Heart left ventricle (tissue), 16 donors: ENCODE measurements at regions of chr13 and their contacts with region 1.

Region 1: DNA sequence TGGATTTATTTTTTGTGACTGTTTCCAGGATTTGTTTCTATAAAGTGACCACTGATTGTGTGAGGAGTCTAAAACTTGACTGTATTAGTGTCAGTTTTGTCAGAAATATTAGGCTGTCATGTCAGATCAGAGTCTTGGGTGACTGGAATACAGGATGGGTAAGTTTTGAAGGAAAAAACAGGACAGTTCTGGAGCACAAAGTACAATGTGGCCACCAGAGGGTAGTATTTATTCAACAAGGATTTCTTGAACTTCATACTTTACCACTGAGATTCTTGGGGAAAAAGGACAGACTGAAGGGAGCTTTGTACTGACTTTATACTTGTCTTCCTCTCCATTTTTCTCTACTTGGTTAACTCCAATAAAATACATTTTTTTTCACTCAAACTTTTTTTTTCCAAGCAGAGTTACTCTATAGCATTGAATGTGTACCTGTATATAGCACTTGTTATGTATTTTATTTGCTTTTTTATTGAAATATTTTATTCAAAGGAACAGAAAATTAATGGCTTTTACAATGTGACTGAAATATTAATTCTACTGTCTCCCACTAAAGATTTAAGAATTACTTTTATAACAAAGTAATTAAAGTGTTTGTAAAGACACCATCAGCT is 51.1 kb downstream of the LMO7 start:
- DNase-seq: no peak
- ATAC-seq: peak in 1 of 4 donors; percentile 28
- H3K4me3 ChIP-seq: no peak overlapping the region
- H3K27ac ChIP-seq: no peak overlapping the region
- H3K4me1 ChIP-seq: no peaks in the 10 kb centered on the region
- H3K27me3 ChIP-seq: no peaks in the 10 kb centered on the region
- CTCF ChIP-seq: peak in 11 of 12 donors; percentile 13 to 54 (median 36)
- POLR2A ChIP-seq: no peak

Region 2: DNA sequence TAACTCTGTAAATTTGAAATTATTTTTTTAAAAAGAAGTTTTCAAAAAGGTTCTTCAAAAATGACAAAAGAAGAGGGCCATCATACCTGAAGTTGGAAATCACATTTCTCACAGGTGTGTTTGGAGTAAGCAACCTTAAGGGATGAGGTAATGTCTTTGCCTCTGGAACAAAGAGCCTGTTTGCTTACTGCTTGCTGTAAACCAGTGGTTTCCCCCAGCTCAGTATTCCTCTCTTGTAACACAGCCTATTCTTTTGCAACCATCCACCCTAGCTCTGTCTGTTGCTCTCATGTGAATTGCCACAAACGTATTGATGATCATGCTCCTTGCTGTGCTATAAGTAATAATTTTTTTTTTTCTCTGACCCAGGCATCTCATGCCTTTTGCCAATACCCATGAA is 99.6 kb before region 1 on chr13:
- intact Hi-C with region 1: no loop called
- DNase-seq: no peak
- ATAC-seq: no peak
- H3K4me3 ChIP-seq: no peak overlapping the region
- H3K27ac ChIP-seq: no peak overlapping the region
- H3K4me1 ChIP-seq: no peaks in the 10 kb centered on the region
- H3K27me3 ChIP-seq: no peaks in the 10 kb centered on the region
- CTCF ChIP-seq: no peak
- POLR2A ChIP-seq: no peak

Region 3: DNA sequence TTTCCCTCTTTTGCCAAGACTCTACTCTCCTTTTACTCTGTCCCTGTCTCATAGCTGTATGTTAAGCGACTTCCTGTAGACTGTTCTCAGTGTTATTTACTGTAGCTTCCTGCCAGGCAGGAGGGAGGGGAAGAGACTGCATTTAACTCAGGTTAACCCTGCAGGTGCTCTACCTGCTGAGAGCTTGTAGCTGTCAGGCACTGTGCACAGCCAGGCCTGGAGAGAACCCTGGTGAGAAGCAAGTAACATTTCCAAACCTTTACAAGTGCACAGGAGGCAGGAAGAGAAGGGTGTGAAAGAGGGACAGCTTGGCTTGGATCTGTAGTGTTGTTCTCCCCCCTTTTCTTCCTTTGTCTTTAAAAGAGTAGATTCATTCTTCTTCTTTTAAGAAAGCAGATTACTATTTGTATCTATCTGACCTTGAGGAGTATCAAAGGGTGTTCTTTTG is 115.9 kb after region 1 on chr13:
- intact Hi-C with region 1: loop called in 3 of 10 experiments (anchors 10 kb)
- DNase-seq: no peak
- ATAC-seq: peak; percentile 17 to 38 (median 26)
- H3K4me3 ChIP-seq: peak overlapping the region in 2 of 12 donors; percentile 11 to 59
- H3K27ac ChIP-seq: peak overlapping the region; percentile 49 to 96 (median 83)
- H3K4me1 ChIP-seq: peaks cover 0 to 32% (median 11%) of the 10 kb centered on the region in 12 donors
- H3K27me3 ChIP-seq: no peaks in the 10 kb centered on the region
- CTCF ChIP-seq: no peak
- POLR2A ChIP-seq: no peak

Region 4: DNA sequence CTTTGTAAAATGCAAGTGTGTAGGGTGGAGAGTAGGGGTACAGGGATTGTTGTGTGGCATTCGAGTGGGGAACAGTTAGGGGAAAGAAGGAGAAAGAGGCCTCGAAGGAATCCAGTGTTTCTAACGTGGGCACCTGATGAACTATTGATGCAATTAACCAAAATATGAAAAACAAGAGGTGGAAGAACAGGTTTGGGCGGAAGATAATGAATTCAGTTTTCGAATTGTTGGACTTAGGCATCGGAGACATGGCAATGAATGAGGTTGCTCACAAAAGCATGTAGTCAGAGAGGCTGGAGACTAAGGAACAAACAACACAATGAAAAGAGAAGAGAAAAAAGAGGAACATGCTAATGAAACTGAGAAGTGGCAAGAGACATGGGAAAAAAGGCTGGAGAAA is 141.6 kb after region 1 on chr13:
- intact Hi-C with region 1: loop called in 2 of 10 experiments (anchors 10 kb)
- DNase-seq: no peak
- ATAC-seq: no peak
- H3K4me3 ChIP-seq: no peak overlapping the region
- H3K27ac ChIP-seq: no peak overlapping the region
- H3K4me1 ChIP-seq: peaks cover 0 to 52% (median 5%) of the 10 kb centered on the region in 12 donors
- H3K27me3 ChIP-seq: no peaks in the 10 kb centered on the region
- CTCF ChIP-seq: no peak
- POLR2A ChIP-seq: no peak

Region 5: GRCh38 chr13:75864718-75865117 is 177.5 kb after region 1 on chr13:
- intact Hi-C with region 1: loop called in 4 of 10 experiments (anchors 5 to 10 kb)
- DNase-seq: no peak
- ATAC-seq: no peak
- H3K4me3 ChIP-seq: no peak overlapping the region
- H3K27ac ChIP-seq: no peak overlapping the region
- H3K4me1 ChIP-seq: no peaks in the 10 kb centered on the region
- H3K27me3 ChIP-seq: no peaks in the 10 kb centered on the region
- CTCF ChIP-seq: no peak
- POLR2A ChIP-seq: no peak

Region 6: DNA sequence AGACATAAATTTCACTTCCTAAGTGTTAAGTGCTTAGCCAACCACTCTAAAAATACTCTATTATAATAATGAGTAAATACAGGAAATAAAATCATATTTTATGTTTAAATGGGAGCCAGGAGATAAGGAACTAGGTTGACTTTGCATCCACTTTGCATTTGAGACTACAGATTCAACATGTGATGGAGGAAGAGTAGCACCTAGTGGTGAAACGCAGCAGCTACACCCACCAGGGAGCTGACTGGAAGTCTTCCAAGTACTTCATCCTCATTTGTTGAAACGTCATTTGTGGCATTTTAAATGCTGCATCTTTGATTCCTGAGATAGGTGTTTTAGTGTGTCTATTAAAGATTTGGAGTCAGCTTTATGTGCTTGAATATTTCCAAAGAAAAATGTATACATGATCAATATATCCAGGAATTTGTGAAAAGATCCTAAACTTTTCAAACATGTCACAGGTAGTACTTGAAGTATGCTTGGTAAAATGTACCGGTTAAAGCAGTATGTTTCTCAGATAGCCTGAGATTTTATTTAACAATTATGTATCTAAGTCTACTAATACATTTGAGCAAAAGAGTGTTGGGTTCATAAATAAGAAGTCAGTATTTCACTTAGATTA is 1216.4 kb after region 1 on chr13:
- intact Hi-C with region 1: loop called in 7 of 10 experiments (anchors 5 to 10 kb)
- DNase-seq: peak; percentile 47 to 67 (median 54)
- ATAC-seq: peak; percentile 64 to 83 (median 79)
- H3K4me3 ChIP-seq: no peak overlapping the region
- H3K27ac ChIP-seq: no peak overlapping the region
- H3K4me1 ChIP-seq: no peaks in the 10 kb centered on the region
- H3K27me3 ChIP-seq: peaks cover 0 to 3% (median 0%) of the 10 kb centered on the region in 9 donors
- CTCF ChIP-seq: peak; percentile 95 to 100 (median 99)
- POLR2A ChIP-seq: no peak